Activated naive CD4-positive, alpha-beta T cell treated with anti-CD3 and anti-CD28 coated beads for 36 hours (primary cell): ENCODE measurements at regions of chr21 and their contacts with region 1.

Region 1: DNA sequence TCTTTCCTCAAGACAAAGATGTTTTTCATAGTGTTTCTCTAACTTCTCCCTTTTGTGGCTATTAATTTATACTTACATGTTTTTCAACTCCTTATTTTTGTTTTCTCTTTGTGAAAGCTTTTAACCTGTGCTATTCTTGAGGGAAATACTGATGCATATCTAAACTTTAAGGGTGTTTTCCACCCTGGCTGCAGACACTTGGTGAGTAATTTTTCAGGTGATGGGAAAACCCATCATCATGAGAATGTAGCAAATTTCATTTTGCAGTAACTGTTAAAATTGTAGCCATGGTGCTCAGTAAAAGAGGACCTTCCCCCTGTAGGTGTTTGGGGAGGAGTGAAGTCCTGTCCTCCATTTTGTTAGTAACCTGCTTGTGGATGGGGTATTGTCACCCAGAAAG is 124.2 kb downstream of the LIPI start:
- DNase-seq: peak; percentile 49
- H3K4me3 Mint-ChIP-seq: no peak overlapping the region
- H3K27ac Mint-ChIP-seq: peak overlapping the region; percentile 70
- H3K4me1 Mint-ChIP-seq: peaks cover 29% of the 10 kb centered on the region
- H3K27me3 Mint-ChIP-seq: no peaks in the 10 kb centered on the region

Region 2: GRCh38 chr21:14040386-14040785 is 46.2 kb before region 1 on chr21:
- CTCF ChIA-PET with region 1: no interaction called
- intact Hi-C with region 1: no loop called
- DNase-seq: no peak
- H3K4me3 Mint-ChIP-seq: no peak overlapping the region
- H3K27ac Mint-ChIP-seq: no peak overlapping the region
- H3K4me1 Mint-ChIP-seq: no peaks in the 10 kb centered on the region
- H3K27me3 Mint-ChIP-seq: no peaks in the 10 kb centered on the region

Region 3: GRCh38 chr21:14070020-14070893 is 16.3 kb before region 1 on chr21:
- CTCF ChIA-PET with region 1: no interaction called
- intact Hi-C with region 1: no loop called
- DNase-seq: no peak
- H3K4me3 Mint-ChIP-seq: no peak overlapping the region
- H3K27ac Mint-ChIP-seq: no peak overlapping the region
- H3K4me1 Mint-ChIP-seq: no peaks in the 10 kb centered on the region
- H3K27me3 Mint-ChIP-seq: no peaks in the 10 kb centered on the region

Region 4: GRCh38 chr21:14120091-14120734 is 33.7 kb after region 1 on chr21:
- CTCF ChIA-PET with region 1: no interaction called
- intact Hi-C with region 1: loop called (anchors 1 kb)
- DNase-seq: peak; percentile 75
- H3K4me3 Mint-ChIP-seq: no peak overlapping the region
- H3K27ac Mint-ChIP-seq: no peak overlapping the region
- H3K4me1 Mint-ChIP-seq: peaks cover 8% of the 10 kb centered on the region
- H3K27me3 Mint-ChIP-seq: no peaks in the 10 kb centered on the region

Region 5: GRCh38 chr21:14215971-14216641 is 129.6 kb after region 1 on chr21 and contains the start of gene RBM11:
- CTCF ChIA-PET with region 1: no interaction called
- intact Hi-C with region 1: loop called (anchors 5 kb)
- DNase-seq: peak; percentile 82
- H3K4me3 Mint-ChIP-seq: peak within 1 kb of the TSS; percentile 79
- H3K27ac Mint-ChIP-seq: no peak within 1 kb of the TSS
- H3K4me1 Mint-ChIP-seq: peaks cover 6% of the 10 kb centered on the region
- H3K27me3 Mint-ChIP-seq: peaks cover 4% of the 10 kb centered on the region
- total RNA-seq, gene RBM11: 4.9 to 5.9 TPM

Region 6: GRCh38 chr21:14273736-14274538 is 187.4 kb after region 1 on chr21:
- CTCF ChIA-PET with region 1: no interaction called
- intact Hi-C with region 1: no loop called
- DNase-seq: no peak
- H3K4me3 Mint-ChIP-seq: no peak overlapping the region
- H3K27ac Mint-ChIP-seq: no peak overlapping the region
- H3K4me1 Mint-ChIP-seq: peaks cover 3% of the 10 kb centered on the region
- H3K27me3 Mint-ChIP-seq: peaks cover 33% of the 10 kb centered on the region

Region 7: GRCh38 chr21:14361958-14362357 is 275.4 kb after region 1 on chr21:
- CTCF ChIA-PET with region 1: no interaction called
- intact Hi-C with region 1: no loop called
- DNase-seq: no peak
- H3K4me3 Mint-ChIP-seq: no peak overlapping the region
- H3K27ac Mint-ChIP-seq: no peak overlapping the region
- H3K4me1 Mint-ChIP-seq: no peaks in the 10 kb centered on the region
- H3K27me3 Mint-ChIP-seq: peaks cover 9% of the 10 kb centered on the region